Sigmoid colon (tissue), 7 donors: ENCODE measurements at regions of chr12 and their contacts with region 1.

Region 1: DNA sequence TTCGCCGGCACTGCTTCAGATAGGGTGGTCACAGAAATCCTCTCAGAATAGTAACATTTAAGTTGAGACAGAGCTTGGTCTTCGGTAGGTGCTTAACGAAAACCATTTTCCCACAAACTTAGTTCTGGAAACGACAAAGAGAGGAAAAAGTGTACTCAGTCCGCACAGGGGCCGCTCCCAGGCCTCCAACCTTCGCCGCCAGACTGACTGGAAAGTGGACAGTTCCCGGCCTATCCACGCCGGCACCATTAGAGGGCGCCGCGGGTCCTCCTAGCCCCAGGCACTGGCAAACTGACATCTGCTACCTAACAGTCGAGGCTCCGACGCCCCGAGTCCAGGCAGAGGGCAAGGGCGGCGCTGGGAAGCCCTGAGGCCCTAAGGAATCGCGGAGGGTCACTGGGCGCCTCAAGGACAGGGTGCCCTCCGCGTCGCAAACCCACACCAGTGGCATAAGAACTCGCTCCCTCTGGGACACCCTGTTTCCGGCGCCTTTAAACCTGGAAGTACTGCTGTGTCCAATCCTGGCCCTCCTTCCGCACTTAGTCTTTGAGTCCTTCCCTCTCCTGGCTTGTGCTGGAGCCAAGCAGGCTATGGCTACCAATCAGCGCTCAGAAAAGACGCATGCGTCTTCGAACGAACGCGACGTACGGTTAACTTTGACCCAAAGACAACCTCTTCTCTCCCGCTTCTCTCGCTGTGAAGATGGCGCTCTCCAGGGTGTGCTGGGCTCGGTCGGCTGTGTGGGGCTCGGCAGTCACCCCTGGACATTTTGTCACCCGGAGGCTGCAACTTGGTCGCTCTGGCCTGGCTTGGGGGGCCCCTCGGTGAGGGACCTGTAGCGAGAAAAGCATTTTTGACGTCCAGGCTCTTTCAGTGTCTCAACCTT is at the start of gene LETMD1:
- DNase-seq: peak; percentile 98
- H3K4me3 ChIP-seq: peak within 1 kb of the TSS; percentile 71 to 83 (median 77)
- H3K27ac ChIP-seq: peak within 1 kb of the TSS; percentile 89 to 95 (median 92)
- H3K4me1 ChIP-seq: peaks cover 0 to 26% (median 21%) of the 10 kb centered on the region in 4 donors
- H3K27me3 ChIP-seq: no peaks in the 10 kb centered on the region
- CTCF ChIP-seq: peak; percentile 80 to 89 (median 87)
- EP300 ChIP-seq: no peak
- POLR2A ChIP-seq: peak; percentile 50 to 56
- total RNA-seq, gene LETMD1: 59.5 to 87.2 (median 72.4) TPM

Region 2: DNA sequence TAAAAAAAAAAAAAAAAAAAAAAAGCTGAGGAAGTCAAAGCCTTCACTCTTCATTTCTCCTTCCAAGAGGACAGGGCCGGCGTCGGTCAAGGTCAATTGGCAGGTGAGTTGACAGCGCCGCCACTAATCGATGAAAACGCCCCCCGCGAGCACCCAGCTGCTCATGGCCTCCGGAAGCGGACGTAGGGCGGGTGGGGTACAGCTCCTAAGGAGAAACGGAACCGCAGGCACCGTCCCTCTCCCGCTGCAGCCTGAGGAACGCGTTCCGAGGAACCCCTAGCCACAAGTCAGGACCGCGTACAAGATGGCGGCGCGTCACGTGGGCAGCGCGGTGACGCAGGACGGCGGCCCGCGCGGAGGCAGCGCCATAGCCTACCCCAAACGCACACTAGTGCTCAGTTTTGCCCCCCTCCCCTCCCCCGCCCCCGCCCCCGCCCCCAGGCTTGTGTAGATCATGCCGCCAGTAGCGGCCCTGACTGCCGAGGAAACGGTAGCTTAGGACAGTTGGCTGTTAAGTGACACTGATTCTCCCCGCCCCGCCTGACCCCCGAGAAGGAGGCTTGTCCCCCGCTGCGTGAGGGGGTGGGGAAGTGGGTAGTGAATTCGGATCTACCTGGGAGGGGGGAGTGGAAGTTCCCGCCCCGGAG is 284.1 kb before region 1 on chr12 and contains the start of gene ATF1:
- intact Hi-C with region 1: loop called (anchors 5 kb)
- DNase-seq: peak; percentile 96
- H3K4me3 ChIP-seq: peak within 1 kb of the TSS; percentile 95 to 99 (median 99)
- H3K27ac ChIP-seq: peak within 1 kb of the TSS; percentile 96 to 100 (median 99)
- H3K4me1 ChIP-seq: peaks cover 0 to 38% (median 33%) of the 10 kb centered on the region in 4 donors
- H3K27me3 ChIP-seq: no peaks in the 10 kb centered on the region
- CTCF ChIP-seq: no peak
- EP300 ChIP-seq: no peak
- POLR2A ChIP-seq: peak; percentile 68 to 71
- total RNA-seq, gene ATF1: 12.6 to 27.6 (median 20.8) TPM

Region 3: DNA sequence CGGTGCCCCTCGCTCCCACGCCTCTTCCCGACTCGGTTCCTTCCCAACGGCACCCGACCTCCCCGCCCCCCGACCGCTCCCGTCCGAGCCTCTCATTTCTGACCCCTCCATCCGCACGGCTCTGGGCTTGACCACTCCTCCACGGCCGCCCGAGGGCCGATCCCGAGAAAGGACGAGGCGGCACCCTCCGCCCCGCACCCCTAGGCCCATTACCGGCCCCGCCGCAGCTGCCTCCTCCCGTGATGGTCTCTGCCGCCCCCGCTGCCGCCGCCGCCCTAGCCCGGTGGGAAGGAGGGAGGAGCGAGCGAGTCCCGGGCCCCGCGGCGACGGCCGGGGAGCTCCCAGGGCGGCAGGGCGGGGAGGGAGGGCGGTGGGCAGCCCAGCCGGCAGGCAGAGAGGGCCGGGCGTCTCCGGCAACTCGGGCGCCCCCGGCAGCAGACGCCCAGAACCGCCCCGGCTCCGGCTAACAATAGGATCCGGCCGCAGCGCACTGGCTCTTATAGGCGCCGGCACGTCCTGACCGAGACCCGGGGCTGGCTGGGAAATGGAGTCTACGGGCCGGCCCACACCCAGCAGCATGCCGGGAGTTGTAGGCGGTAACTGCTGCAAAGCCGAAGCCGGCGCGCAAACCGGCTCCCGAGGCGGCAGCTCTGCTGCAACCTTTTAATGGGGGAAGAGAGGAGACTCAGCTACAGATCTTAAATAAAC is 35.4 kb after region 1 on chr12 and contains the start of gene CSRNP2:
- intact Hi-C with region 1: loop called (anchors 1 kb)
- DNase-seq: peak; percentile 99
- H3K4me3 ChIP-seq: peak within 1 kb of the TSS; percentile 90 to 99 (median 93)
- H3K27ac ChIP-seq: peak within 1 kb of the TSS; percentile 97 to 99 (median 98)
- H3K4me1 ChIP-seq: peaks cover 0 to 29% (median 18%) of the 10 kb centered on the region in 4 donors
- H3K27me3 ChIP-seq: no peaks in the 10 kb centered on the region
- CTCF ChIP-seq: no peak
- EP300 ChIP-seq: peak in 1 of 4 donors; percentile 16
- POLR2A ChIP-seq: peak; percentile 92 to 95
- total RNA-seq, gene CSRNP2: 17.4 to 23.9 (median 20.6) TPM

Region 4: DNA sequence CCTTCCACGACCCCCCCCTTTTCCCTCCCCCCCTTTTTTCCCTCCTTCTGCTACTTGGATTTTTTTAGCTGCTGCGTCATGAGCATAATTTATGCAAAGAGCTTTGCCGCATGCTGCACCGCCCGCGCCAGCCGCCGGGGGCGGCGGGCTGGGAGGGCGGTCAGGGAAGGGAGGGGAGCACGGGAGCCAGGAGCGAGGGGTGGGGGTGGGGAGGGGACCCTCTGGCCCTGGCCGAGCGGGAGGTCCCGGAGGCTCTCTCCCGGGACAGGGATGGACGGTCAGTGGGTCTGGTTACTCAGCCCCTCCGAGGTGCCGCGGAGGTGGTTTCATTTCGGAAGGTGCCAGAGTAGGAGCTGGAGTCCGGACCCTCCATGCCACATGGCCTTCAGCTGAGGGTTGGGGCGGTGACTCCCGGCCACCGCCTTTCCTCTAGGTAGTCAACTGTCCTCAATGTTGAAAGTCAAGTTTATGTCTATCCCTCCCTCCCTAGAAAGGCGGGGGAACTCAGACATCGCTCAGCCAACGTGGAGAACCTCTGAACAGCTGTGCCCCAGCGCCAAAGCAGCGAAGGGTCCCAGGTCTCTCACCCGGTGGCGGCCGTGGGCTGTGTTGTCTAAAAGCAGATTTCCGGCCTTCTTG is 170.2 kb after region 1 on chr12 and contains the start of gene POU6F1:
- intact Hi-C with region 1: loop called (anchors 5 kb)
- DNase-seq: peak; percentile 88
- H3K4me3 ChIP-seq: peak within 1 kb of the TSS; percentile 89 to 98 (median 94)
- H3K27ac ChIP-seq: peak within 1 kb of the TSS; percentile 98 to 100 (median 99)
- H3K4me1 ChIP-seq: peaks cover 0 to 25% (median 16%) of the 10 kb centered on the region in 4 donors
- H3K27me3 ChIP-seq: no peaks in the 10 kb centered on the region
- CTCF ChIP-seq: peak; percentile 23 to 80 (median 44)
- EP300 ChIP-seq: no peak
- POLR2A ChIP-seq: peak in 1 of 2 donors; percentile 16
- total RNA-seq, gene POU6F1: 5.8 to 15.8 (median 8.5) TPM

Region 5: DNA sequence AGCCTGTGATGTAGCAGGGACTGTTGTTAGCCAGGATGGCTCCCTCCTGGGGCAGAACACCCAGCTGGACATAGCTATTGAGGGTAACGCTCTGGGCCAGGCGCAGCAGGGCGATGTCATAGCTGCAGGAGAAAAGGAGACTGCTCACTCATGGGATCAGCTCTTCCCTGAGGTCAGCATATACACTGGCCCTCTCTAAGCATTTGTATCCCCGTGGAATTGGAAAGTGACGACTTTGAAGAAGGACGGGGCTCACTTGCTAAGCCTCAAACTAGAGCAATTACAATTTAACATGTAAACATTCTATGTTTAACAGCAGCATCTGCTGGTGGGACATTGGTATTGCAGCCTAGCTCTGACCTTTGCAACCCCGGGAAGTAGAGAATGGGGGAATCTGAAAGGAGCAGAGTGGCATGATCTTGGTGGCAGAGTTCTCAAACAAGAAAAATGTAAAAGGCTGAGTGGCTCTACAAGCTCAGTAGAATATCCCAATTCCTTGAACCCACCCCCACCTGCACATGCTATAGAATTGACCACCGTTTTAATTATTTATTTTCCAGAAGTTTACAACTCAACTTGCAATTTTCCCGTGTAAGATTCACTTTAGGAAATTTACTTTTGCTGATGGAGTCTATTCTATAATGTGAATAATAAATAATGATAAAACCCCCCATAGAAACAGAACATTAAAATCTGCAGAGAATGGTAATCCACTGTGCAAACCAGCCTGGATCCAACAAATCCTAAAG is 293.5 kb after region 1 on chr12:
- intact Hi-C with region 1: loop called (anchors 1 kb)
- DNase-seq: peak; percentile 81
- H3K4me3 ChIP-seq: peak overlapping the region in 1 of 4 donors; percentile 20
- H3K27ac ChIP-seq: no peak overlapping the region
- H3K4me1 ChIP-seq: peaks cover 0 to 6% (median 0%) of the 10 kb centered on the region in 4 donors
- H3K27me3 ChIP-seq: no peaks in the 10 kb centered on the region
- CTCF ChIP-seq: peak; percentile 89 to 98 (median 94)
- EP300 ChIP-seq: no peak
- POLR2A ChIP-seq: no peak

Region 6: DNA sequence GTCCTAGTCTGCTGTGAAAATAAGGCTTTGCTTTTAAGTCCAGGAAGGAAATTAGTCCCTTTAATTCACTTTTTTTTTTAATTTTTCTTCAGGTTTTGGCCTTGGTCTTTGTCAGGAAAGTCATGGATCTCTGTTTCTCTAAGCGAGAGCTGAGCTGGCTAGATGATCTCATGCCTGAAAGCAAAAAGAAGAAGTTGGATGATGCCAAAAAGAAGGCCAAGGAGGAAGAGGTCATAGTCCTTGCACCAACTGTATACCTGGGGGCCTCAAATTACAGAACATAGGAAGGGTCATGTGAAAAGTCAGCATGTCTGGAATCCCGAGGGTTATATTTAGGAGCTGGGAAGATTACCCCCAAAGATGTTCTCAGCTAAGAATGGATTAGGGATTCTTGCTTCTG is 449.0 kb after region 1 on chr12:
- intact Hi-C with region 1: no loop called
- DNase-seq: no peak
- H3K4me3 ChIP-seq: no peak overlapping the region
- H3K27ac ChIP-seq: no peak overlapping the region
- H3K4me1 ChIP-seq: no peaks in the 10 kb centered on the region
- H3K27me3 ChIP-seq: no peaks in the 10 kb centered on the region
- CTCF ChIP-seq: no peak
- EP300 ChIP-seq: no peak
- POLR2A ChIP-seq: no peak